Activated CD4-positive, alpha-beta memory T cell treated with anti-CD3 and anti-CD28 coated beads, Interleukin-2, amount 10 ng/mL, durations not matched to agents 7 days and 5 days (primary cell): ENCODE measurements at regions of chr5 and their contacts with region 1.

Region 1: DNA sequence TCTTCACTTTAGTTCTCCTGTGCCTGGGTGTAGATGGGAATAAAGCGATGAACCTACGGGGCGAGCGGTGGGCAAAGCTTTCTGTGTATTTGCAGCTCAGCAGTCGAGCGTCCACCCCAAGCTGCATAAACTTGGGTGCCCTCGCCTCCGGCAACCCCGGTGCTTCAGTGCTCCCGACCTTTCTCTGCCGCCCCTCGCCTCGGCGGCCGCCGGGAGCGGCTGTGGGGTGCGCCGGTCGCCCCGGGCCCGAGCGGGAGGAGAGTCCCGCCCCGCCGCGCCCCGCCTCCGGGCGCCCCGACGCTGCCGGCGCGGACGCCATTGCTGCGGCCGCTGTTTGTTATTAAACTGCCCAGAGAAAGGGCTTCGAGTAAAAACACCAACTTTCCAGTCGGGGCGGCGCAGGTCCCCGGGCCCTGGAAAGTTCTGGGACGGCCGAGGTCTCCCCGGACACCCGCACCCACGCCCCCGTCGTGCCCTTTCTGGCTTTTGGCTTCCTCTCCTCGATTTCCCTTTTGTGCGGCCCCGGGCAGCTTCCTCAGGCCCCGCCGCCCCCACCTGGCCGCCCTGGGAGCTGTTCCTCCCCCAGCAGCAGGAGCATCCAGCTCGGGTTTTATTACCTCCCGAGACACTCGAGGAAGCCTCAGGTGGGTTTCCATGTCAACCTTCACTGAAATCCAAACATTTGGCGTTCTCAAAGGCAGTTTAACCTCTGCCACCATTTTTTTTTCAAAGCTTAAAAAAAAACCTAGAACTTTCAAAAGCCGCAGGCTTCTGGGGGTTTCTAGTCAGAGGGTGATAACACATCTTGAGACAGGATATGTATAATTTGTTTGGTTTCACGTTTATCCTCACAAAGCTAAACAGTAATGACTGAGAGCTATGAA is 334.3 kb downstream of the CWC27 start:
- DNase-seq: peak; percentile 44
- H3K4me3 Mint-ChIP-seq: peak overlapping the region; percentile 69
- H3K27ac Mint-ChIP-seq: no peak overlapping the region
- H3K4me1 Mint-ChIP-seq: peaks cover 35% of the 10 kb centered on the region
- H3K27me3 Mint-ChIP-seq: peaks cover 23% of the 10 kb centered on the region

Region 2: GRCh38 chr5:64632251-64632650 is 470.8 kb before region 1 on chr5:
- CTCF ChIA-PET with region 1: no interaction called
- POLR2A ChIA-PET with region 1: no interaction called
- DNase-seq: no peak
- H3K4me3 Mint-ChIP-seq: no peak overlapping the region
- H3K27ac Mint-ChIP-seq: no peak overlapping the region
- H3K4me1 Mint-ChIP-seq: peaks cover 5% of the 10 kb centered on the region
- H3K27me3 Mint-ChIP-seq: peaks cover 19% of the 10 kb centered on the region

Region 3: DNA sequence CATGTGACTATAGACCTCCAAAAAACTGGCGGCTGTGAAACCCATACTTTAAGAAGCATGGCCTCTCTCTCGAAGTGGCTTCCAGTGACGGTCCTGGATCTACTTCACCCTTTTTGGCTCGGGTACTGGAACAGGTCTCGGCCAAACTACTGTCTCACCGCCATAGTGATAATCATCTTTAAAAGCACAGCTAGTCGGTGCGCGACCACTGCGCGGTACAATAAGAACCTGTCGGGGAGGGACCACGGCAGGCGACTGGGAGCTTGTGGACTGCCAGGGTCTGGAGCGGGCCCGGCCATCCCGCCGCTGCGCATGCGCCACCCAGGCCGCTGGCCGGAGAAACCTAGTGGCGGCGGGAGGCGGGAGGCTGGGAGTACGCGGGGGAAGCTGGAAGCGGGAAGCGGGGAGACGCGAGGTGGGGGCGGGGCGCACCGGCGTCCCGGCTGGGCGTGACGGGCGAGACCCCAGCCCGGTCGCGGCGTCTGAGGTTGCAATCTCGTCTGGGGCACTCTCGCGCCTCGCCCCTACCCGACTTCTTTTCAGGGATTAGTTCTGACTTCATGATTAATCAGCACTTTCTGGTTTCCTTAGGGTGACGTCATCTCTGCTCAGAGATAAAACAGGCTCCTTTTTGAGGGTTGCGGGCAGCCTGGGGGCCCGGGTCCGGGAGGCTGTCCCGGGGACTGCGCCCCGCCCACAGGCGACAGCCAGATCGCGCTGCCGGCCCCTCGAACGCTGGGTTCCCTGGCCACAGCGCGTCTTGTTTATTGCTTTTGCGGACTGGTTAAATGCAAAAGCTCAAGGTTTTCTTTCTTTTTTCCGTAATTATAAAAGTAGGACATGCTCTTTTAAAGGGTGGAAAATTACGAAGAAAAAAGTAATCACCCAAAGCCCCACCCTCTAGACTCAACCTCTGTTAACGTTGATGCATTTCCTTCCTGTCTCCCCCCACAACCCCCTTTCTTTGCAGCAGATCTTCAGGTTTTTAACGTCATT is 67.6 kb before region 1 on chr5:
- CTCF ChIA-PET with region 1: no interaction called
- POLR2A ChIA-PET with region 1: interaction called, 22 read pairs
- DNase-seq: peak; percentile 86
- H3K4me3 Mint-ChIP-seq: peak overlapping the region; percentile 71
- H3K27ac Mint-ChIP-seq: peak overlapping the region; percentile 91
- H3K4me1 Mint-ChIP-seq: peaks cover 38% of the 10 kb centered on the region
- H3K27me3 Mint-ChIP-seq: no peaks in the 10 kb centered on the region

Region 4: GRCh38 chr5:65086234-65086890 is 16.7 kb before region 1 on chr5:
- CTCF ChIA-PET with region 1: no interaction called
- POLR2A ChIA-PET with region 1: no interaction called
- DNase-seq: no peak
- H3K4me3 Mint-ChIP-seq: no peak overlapping the region
- H3K27ac Mint-ChIP-seq: no peak overlapping the region
- H3K4me1 Mint-ChIP-seq: no peaks in the 10 kb centered on the region
- H3K27me3 Mint-ChIP-seq: peaks cover 5% of the 10 kb centered on the region